T-cell (primary cell): ENCODE measurements at regions of chr5 and their contacts with region 1.

Region 1: GRCh38 chr5:79133657-79134451 is 22.2 kb downstream of the BHMT start:
- DNase-seq: peak; percentile 13 to 75 (median 50)
- ATAC-seq: peak; percentile 77 to 90 (median 80)
- H3K4me3 ChIP-seq: no peak overlapping the region
- H3K4me3 Mint-ChIP-seq: peak overlapping the region; percentile 66 to 76 (median 67)
- H3K27ac ChIP-seq: no peak overlapping the region
- H3K27ac Mint-ChIP-seq: peak overlapping the region; percentile 49 to 73
- H3K4me1 ChIP-seq: peaks cover 2 to 9% of the 10 kb centered on the region in 2 experiments
- H3K4me1 Mint-ChIP-seq: peaks cover 8 to 12% (median 8%) of the 10 kb centered on the region in 3 donors
- H3K27me3 ChIP-seq: no peaks in the 10 kb centered on the region
- H3K27me3 Mint-ChIP-seq: peaks cover 3% of the 10 kb centered on the region in 2 donors

Region 2: GRCh38 chr5:78467752-78468357 is 666.0 kb before region 1 on chr5:
- CTCF ChIA-PET with region 1: interaction called in 1 of 2 experiments, 12 read pairs
- POLR2A ChIA-PET with region 1: no interaction called
- DNase-seq: peak in 1 of 35 experiments; percentile 16
- ATAC-seq: no peak
- H3K4me3 ChIP-seq: no peak overlapping the region
- H3K4me3 Mint-ChIP-seq: no peak overlapping the region
- H3K27ac ChIP-seq: no peak overlapping the region
- H3K27ac Mint-ChIP-seq: no peak overlapping the region
- H3K4me1 ChIP-seq: no peaks in the 10 kb centered on the region
- H3K4me1 Mint-ChIP-seq: peaks cover 0 to 11% (median 0%) of the 10 kb centered on the region in 3 donors
- H3K27me3 ChIP-seq: no peaks in the 10 kb centered on the region
- H3K27me3 Mint-ChIP-seq: no peaks in the 10 kb centered on the region

Region 3: DNA sequence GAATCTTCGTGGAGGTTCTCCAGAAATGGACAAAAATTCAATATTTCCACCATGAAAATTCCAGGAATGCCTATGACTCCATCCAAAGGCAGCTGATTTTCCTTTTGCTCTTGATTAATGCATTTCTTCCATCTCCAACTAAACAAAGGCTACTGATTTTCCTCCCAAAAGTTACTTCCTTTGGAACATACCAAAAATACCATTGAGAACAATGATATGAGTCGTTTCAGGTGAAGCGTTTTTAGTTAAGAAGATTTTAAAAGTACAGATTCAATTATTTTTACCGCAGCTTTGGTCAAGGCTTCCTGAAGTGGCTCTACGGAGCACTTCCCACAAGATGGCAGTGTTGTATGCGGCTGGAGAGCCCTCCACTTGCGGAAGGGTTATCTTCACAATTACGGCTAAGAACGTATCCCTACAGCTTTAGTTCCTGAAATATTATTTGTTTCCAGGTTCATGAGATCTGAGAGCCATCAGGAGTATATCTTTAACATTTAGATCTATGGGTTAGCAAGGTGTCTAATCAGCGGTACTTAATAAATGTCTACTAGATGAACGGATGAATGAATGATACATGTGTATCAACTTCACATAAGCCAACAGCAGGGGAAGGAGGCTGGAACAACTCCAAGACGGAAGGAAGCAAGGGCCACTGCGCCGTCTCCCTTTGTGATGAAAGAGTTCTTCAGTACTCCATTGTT is 112.8 kb before region 1 on chr5:
- CTCF ChIA-PET with region 1: interaction called, 10 to 79 read pairs
- POLR2A ChIA-PET with region 1: interaction called in 1 of 2 experiments, 4 read pairs
- DNase-seq: peak in 19 of 35 experiments; percentile 2 to 54 (median 16)
- ATAC-seq: peak in 3 of 4 experiments; percentile 34 to 50 (median 39)
- H3K4me3 ChIP-seq: no peak overlapping the region
- H3K4me3 Mint-ChIP-seq: no peak overlapping the region
- H3K27ac ChIP-seq: no peak overlapping the region
- H3K27ac Mint-ChIP-seq: no peak overlapping the region
- H3K4me1 ChIP-seq: peaks cover 0 to 4% of the 10 kb centered on the region in 2 experiments
- H3K4me1 Mint-ChIP-seq: peaks cover 11 to 16% (median 15%) of the 10 kb centered on the region in 3 donors
- H3K27me3 ChIP-seq: peaks cover 0 to 9% of the 10 kb centered on the region in 2 experiments
- H3K27me3 Mint-ChIP-seq: peaks cover 48 to 55% of the 10 kb centered on the region in 2 donors

Region 4: DNA sequence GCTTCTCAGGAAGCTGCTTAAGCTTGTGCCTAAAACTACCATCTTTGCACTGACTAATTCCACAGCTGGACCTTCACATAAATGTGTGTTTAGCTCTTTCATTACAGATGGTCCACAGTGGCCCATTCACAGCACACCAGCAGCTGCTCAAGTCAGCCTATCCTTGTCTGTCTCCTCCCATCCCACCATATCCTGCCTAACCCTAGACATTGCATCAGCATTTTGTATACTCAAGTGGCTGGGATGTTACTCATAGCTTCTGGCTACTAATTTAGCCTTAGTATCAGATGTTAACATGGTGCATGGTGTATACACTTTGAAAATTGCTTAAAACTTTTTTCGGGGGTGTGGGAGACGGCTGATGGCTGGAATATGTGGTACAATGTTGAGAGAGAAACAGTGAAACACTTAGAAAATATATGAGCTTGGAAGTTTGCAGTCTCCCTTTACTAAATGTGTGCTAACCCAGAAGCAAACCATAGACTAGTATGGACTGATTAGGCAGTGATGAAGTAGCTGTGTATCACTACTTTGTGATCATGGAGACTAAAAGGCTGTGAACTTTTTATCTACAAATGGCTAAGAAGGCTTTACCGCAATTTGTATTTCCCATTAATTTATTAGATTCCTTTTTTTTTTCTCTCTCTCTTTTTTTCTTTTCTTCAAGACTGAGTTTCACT is 185.2 kb after region 1 on chr5:
- CTCF ChIA-PET with region 1: no interaction called
- POLR2A ChIA-PET with region 1: no interaction called
- DNase-seq: no peak
- ATAC-seq: peak in 1 of 4 experiments; percentile 24
- H3K4me3 ChIP-seq: no peak overlapping the region
- H3K4me3 Mint-ChIP-seq: no peak overlapping the region
- H3K27ac ChIP-seq: no peak overlapping the region
- H3K27ac Mint-ChIP-seq: no peak overlapping the region
- H3K4me1 ChIP-seq: no peaks in the 10 kb centered on the region
- H3K4me1 Mint-ChIP-seq: no peaks in the 10 kb centered on the region
- H3K27me3 ChIP-seq: no peaks in the 10 kb centered on the region
- H3K27me3 Mint-ChIP-seq: no peaks in the 10 kb centered on the region

Region 5: DNA sequence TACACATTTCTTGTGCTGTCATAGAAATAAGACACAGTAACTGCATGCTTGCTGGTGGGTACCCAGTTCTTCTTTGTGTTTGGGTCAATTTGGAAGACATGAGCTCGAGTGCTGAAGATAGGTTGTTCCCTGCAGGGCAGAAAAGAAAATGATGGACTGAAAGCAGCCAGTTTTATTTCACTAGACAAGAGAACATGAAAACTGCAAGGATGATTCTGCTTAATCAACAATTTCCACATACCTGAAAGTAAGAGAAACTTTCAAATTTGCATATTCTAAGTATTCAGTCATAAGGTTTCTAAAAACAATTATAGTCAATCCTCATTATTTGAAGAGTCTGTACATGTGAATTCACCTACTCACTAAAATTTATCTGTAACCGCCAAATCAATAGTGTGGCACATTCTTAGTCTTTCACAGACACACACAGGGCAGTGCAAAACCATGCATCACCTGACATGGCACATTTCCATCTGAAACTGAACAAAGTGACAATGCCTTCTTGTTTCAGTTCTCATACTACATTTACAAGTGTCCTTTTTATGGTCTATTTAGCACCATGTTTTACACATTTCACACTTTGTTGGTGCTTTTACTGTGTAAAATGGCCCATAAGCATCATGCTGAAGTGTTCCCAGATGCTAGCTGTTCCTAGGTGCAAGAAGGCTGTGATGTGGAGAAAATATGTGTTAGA is 323.2 kb after region 1 on chr5:
- CTCF ChIA-PET with region 1: interaction called, 11 to 14 read pairs
- POLR2A ChIA-PET with region 1: interaction called in 1 of 2 experiments, 3 read pairs
- DNase-seq: no peak
- ATAC-seq: no peak
- H3K4me3 ChIP-seq: no peak overlapping the region
- H3K4me3 Mint-ChIP-seq: no peak overlapping the region
- H3K27ac ChIP-seq: no peak overlapping the region
- H3K27ac Mint-ChIP-seq: no peak overlapping the region
- H3K4me1 ChIP-seq: no peaks in the 10 kb centered on the region
- H3K4me1 Mint-ChIP-seq: no peaks in the 10 kb centered on the region
- H3K27me3 ChIP-seq: no peaks in the 10 kb centered on the region
- H3K27me3 Mint-ChIP-seq: peaks cover 0 to 2% of the 10 kb centered on the region in 2 donors

Region 6: DNA sequence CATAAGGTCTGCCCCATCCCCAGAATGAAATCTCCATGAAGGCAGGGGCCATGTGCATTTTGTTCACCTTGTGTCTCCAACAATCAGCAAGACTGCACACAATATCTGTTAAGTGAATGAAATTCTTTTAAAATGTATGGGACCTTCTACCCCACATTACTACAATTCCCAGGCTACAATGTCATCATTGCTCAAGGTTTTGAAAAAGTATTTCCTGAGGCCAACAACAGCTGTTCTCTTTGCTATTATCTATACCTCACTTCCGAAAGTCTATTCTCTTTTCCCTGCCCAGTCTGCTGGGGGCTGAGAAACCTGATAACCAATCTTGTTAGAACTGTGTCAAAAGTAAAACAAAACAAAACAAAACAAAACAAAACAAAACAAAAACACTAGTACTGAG is 350.9 kb after region 1 on chr5:
- CTCF ChIA-PET with region 1: interaction called in 1 of 2 experiments, 12 read pairs
- POLR2A ChIA-PET with region 1: no interaction called
- DNase-seq: no peak
- ATAC-seq: no peak
- H3K4me3 ChIP-seq: no peak overlapping the region
- H3K4me3 Mint-ChIP-seq: no peak overlapping the region
- H3K27ac ChIP-seq: no peak overlapping the region
- H3K27ac Mint-ChIP-seq: no peak overlapping the region
- H3K4me1 ChIP-seq: no peaks in the 10 kb centered on the region
- H3K4me1 Mint-ChIP-seq: no peaks in the 10 kb centered on the region
- H3K27me3 ChIP-seq: no peaks in the 10 kb centered on the region
- H3K27me3 Mint-ChIP-seq: peaks cover 0 to 2% of the 10 kb centered on the region in 2 donors